Ascending aorta (tissue), 2 donors: ENCODE measurements at regions of chr12 and their contacts with region 1.

Region 1: GRCh38 chr12:70849265-70849960 is 71.1 kb downstream of the PTPRR start:
- DNase-seq: no peak
- H3K4me3 ChIP-seq: no peak overlapping the region
- H3K27ac ChIP-seq: no peak overlapping the region
- H3K4me1 ChIP-seq: peaks cover 0 to 2% of the 10 kb centered on the region in 2 donors
- H3K27me3 ChIP-seq: no peaks in the 10 kb centered on the region
- CTCF ChIP-seq: peak in 2 of 3 experiments; percentile 26 to 39

Region 2: DNA sequence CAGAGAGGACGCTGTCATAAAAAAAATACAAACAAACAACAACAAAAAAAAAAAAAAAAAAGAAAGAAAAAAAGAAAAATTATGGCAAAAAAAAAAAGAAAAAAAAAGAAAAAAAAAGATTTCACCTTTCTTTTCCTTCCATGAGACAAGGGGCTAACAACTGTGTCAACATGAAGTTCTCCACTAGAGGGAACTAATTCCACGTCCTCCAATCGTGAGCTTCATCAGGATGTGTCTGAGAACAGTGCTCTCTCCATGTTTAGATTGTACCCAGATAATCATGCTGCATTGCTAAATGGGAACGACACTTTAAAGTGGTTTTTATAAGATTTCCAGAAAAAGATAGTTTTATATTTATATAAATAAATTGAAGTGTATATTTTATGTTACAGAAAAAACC is 116.0 kb before region 1 on chr12:
- intact Hi-C with region 1: loop called (anchors 1 kb)
- DNase-seq: no peak
- H3K4me3 ChIP-seq: no peak overlapping the region
- H3K27ac ChIP-seq: no peak overlapping the region
- H3K4me1 ChIP-seq: no peaks in the 10 kb centered on the region
- H3K27me3 ChIP-seq: no peaks in the 10 kb centered on the region
- CTCF ChIP-seq: peak; percentile 43 to 67 (median 58)

Region 3: DNA sequence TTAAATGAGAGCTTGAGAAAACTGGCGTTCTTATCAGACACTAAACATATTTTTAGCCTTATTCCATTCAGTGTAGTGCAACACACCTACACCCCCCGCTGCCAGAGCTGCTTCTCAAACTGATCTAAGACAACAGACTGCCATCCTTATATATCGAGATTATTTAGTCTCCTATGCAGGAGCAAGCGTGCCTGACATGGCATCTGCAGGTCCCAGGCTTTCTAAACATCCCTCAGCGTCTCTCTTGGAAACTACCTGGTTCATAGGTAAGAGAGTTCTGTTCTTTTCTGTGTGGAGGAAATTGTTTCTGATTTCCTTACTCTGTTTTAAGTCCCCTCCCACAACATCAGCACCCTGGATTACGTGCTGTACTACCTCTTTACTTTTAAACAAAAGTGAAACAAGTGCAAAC is 95.1 kb before region 1 on chr12:
- intact Hi-C with region 1: loop called (anchors 5 kb)
- DNase-seq: no peak
- H3K4me3 ChIP-seq: peak overlapping the region; percentile 30 to 49
- H3K27ac ChIP-seq: no peak overlapping the region
- H3K4me1 ChIP-seq: no peaks in the 10 kb centered on the region
- H3K27me3 ChIP-seq: no peaks in the 10 kb centered on the region
- CTCF ChIP-seq: no peak

Region 4: GRCh38 chr12:70831538-70831937 is 17.9 kb before region 1 on chr12:
- intact Hi-C with region 1: no loop called
- DNase-seq: no peak
- H3K4me3 ChIP-seq: no peak overlapping the region
- H3K27ac ChIP-seq: no peak overlapping the region
- H3K4me1 ChIP-seq: no peaks in the 10 kb centered on the region
- H3K27me3 ChIP-seq: no peaks in the 10 kb centered on the region
- CTCF ChIP-seq: no peak